Cardiac septum (tissue), 1 donor: ENCODE measurements at regions of chr2 and their contacts with region 1.

Region 1: DNA sequence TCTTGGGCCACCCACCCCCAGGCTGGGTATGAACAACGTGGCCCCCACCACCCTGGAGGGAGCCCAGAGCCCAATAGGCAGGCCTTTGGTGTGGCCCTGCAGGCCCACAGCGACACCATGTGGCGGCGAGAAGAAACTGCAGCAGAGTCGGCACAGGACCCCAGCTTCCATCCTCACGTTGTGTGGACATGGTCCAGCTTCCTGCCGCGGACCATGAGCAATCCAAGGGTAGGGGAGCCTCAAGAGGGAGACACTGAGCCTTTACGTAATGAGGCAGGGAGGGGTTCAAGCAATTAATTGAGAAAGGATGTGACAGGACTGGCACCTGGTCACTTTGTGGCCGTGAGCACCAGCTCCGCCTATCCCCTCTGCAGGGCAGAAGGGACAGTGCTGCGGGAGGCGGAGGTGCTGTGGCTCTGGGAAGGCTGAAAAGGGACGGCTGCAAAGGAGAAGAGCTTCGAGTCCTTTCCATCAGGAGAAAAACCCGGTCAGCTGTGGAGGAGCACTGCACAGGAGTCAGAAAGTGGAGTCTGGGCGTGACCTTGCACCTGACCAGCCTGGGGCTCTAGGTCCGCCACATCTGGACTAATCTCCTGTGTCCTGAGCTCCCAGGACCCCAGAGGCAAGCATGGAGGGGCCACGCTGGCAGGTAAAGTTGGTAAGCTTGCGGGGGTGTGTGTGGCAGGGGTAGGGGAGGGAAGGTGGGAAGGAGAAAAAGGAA is 44.8 kb downstream of the TMEM37 start:
- DNase-seq: peak; percentile 80

Region 2: GRCh38 chr2:118882709-118883210 is 593.7 kb before region 1 on chr2:
- intact Hi-C with region 1: loop called (anchors 10 kb)
- DNase-seq: peak; percentile 80

Region 3: DNA sequence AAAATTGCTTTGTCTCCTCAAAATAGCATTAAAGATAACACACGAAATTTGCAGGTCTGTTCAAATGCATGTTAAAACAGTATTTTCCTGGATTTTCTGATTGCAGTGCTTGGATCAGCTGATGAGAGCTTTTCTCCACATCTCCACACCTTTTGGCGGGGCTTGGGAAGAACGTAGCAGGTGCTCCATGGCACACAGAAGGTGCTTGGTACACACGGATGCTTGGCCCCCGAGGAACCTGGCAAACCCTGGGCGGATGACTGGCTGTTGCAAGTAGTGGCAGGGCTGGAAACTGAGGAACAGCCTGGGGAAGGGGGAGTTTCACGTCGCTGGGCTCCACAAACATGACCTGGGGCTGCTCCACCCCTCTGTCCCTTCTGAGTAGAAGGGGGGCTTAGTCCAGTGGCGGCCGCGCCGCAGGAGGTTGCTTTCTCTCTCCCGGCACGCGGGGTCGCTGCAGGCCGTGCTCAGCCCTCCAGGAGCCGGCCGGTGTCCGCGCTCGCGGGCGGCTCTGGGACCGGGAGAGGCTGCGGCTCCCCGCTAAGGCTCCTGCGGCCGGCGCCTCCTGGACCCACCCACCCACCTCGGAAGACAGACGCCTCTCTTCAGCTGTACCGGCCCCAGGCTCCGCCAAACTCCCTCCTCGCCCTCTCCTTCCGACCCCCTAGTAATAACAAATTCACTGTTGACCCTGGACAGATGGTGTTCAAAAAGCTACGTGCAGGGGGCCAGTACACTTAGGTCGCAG is 465.1 kb before region 1 on chr2:
- intact Hi-C with region 1: loop called (anchors 2 kb)
- DNase-seq: no peak

Region 4: DNA sequence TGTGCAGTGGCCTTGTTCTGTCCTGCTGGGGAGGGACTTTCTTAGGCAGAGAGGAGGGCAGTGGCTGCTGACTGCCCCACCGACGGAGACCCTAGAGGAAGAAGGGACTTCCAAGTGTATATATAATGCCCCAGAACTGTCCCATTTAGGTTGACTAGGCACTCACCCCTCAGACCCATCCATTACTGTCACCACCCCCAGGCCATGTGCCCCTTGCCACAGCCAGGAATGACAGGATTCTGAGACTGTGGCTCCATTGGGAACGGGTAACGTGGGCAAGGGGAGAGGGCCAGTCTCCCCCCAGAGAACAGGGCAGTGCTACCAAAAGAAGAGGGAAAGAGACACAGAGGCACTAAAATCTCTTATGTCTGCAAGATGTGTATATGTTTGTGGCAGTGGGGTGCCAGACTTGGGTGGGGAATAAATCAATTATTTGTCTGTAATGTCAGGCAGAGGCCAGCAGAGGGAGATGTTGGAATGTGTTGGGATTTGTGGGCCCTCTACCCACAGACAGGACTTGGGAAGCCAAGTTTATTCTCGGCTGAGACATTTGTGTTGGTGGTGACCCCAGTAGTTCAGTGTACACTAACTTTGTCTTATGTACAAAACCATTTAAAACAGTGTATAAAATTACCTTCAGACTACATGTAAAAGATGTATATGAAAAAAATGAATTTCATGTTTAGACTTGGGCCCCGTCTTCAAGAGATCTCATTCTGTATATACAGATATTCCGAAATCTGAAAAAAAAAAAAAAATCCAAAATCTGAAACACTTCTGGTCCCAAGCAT is 68.8 kb before region 1 on chr2:
- intact Hi-C with region 1: loop called (anchors 1 kb)
- DNase-seq: no peak

Region 5: GRCh38 chr2:119417908-119418307 is 58.6 kb before region 1 on chr2:
- intact Hi-C with region 1: no loop called
- DNase-seq: no peak